Activated T-helper 2 cell treated with anti-CD3 and anti-CD28 coated beads, Interferon-gamma antibody, Interleukin-2, Interleukin-4, amounts not matched to agents 10 μg/mL and 5 μg/mL and 100 μg/mL, durations not matched to agents 14 hours and 24 hours and 36 hours (primary cell): ENCODE measurements at regions of chr1 and their contacts with region 1.

Region 1: GRCh38 chr1:115609021-115609420 is 32.7 kb upstream of the VANGL1 start:
- DNase-seq: no peak
- H3K4me3 Mint-ChIP-seq: no peak overlapping the region
- H3K27ac Mint-ChIP-seq: no peak overlapping the region
- H3K4me1 Mint-ChIP-seq: no peaks in the 10 kb centered on the region
- H3K27me3 Mint-ChIP-seq: peaks cover 11% of the 10 kb centered on the region

Region 2: GRCh38 chr1:115706587-115707425 is 97.8 kb after region 1 on chr1:
- intact Hi-C with region 1: loop called (anchors 1 kb)
- DNase-seq: no peak
- H3K4me3 Mint-ChIP-seq: no peak overlapping the region
- H3K27ac Mint-ChIP-seq: no peak overlapping the region
- H3K4me1 Mint-ChIP-seq: peaks cover 6% of the 10 kb centered on the region
- H3K27me3 Mint-ChIP-seq: peaks cover 20% of the 10 kb centered on the region

Region 3: GRCh38 chr1:115771847-115772457 is 162.9 kb after region 1 on chr1:
- intact Hi-C with region 1: loop called (anchors 5 kb)
- DNase-seq: no peak
- H3K4me3 Mint-ChIP-seq: no peak overlapping the region
- H3K27ac Mint-ChIP-seq: no peak overlapping the region
- H3K4me1 Mint-ChIP-seq: no peaks in the 10 kb centered on the region
- H3K27me3 Mint-ChIP-seq: peaks cover 8% of the 10 kb centered on the region